ENCODE measurements at regions of chr16 and their contacts with region 1.

Region 1: DNA sequence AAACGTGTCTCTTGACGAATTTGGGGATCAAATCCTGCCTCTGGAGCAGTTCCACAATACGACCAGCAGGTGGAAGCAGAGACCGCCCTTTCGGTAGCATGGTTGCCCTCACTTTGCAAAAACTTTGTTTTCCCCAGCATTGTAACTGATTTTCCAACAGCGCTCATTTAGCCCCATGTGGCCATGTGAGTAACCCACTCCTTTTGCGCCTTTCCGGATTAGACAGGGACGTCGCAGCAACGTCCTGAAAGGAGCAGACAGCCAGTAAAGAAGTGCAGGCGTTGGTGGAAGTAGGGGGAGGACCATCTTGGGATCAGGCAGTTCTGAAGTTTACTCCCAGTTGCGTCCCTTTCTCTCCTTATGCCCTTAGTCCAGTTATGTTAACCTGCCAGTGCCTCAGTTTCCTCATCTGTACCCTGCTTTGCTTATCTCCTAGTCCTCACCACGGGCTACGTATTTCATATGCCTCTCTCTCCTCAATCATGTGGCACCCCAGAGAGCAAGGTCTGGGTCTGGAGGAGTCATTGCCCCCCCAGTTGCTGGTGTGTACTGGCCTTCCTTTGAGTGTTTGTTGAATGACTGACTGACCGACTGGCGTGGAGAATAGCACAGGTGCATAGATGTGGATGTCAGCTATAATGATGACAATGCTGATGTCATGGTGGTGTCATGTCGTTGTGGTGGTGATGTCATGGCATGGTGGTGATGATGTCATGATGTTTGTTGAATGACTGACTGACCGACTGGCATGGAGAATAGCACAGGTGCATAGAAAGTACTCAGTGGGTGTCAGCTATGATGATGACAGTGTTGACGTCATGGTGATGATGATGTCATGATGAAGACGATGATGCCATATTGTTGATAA is 22.3 kb downstream of the TMEM114 start:
- DNase-seq: peak; percentile 61 to 70
- ATAC-seq: peak; percentile 67 to 88 (median 84)
- H3K4me3 ChIP-seq: no peak overlapping the region
- H3K27ac ChIP-seq: no peak overlapping the region
- H3K4me1 ChIP-seq: no peaks in the 10 kb centered on the region
- H3K27me3 ChIP-seq: peaks cover 0 to 29% (median 5%) of the 10 kb centered on the region in 3 donors
- CTCF ChIP-seq: peak; percentile 96

Region 2: DNA sequence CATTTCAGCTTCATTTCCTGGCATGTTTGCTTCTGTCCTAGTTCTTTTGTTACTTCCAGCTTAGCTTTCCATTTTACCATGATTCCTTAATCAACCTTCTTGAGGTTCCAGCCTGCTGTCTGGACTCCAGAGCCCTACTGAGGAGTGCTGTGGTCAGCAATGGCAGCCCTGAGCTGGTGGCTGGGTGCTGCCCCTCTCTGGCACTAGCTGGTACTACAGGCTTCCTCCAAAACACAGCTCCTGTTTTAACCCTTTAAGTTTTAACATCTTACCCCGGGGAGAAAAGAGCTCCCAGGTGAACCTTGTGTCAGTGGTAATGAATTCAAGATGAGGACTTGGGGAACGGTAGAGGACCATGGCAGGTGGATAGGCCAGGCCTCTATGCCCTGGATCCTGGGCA is 373.2 kb before region 1 on chr16:
- intact Hi-C with region 1: no loop called
- DNase-seq: no peak
- ATAC-seq: no peak
- H3K4me3 ChIP-seq: no peak overlapping the region
- H3K27ac ChIP-seq: no peak overlapping the region
- H3K4me1 ChIP-seq: no peaks in the 10 kb centered on the region
- H3K27me3 ChIP-seq: peaks cover 0 to 2% (median 2%) of the 10 kb centered on the region in 3 donors
- CTCF ChIP-seq: no peak

Region 3: GRCh38 chr16:8330761-8331160 is 237.2 kb before region 1 on chr16:
- intact Hi-C with region 1: no loop called
- DNase-seq: no peak
- ATAC-seq: no peak
- H3K4me3 ChIP-seq: no peak overlapping the region
- H3K27ac ChIP-seq: no peak overlapping the region
- H3K4me1 ChIP-seq: no peaks in the 10 kb centered on the region
- H3K27me3 ChIP-seq: no peaks in the 10 kb centered on the region
- CTCF ChIP-seq: no peak

Region 4: GRCh38 chr16:8621572-8622314 is 53.8 kb after region 1 on chr16 and contains the start of gene METTL22:
- intact Hi-C with region 1: loop called in 1 of 2 experiments (anchors 2 kb)
- DNase-seq: peak; percentile 92 to 96
- ATAC-seq: peak; percentile 96 to 98 (median 97)
- H3K4me3 ChIP-seq: peak within 1 kb of the TSS; percentile 85
- H3K27ac ChIP-seq: peak within 1 kb of the TSS; percentile 94
- H3K4me1 ChIP-seq: peaks cover 18% of the 10 kb centered on the region
- H3K27me3 ChIP-seq: no peaks in the 10 kb centered on the region
- CTCF ChIP-seq: no peak
- total RNA-seq, gene METTL22: 66.4 to 85.9 (median 74.8) TPM

Region 5: DNA sequence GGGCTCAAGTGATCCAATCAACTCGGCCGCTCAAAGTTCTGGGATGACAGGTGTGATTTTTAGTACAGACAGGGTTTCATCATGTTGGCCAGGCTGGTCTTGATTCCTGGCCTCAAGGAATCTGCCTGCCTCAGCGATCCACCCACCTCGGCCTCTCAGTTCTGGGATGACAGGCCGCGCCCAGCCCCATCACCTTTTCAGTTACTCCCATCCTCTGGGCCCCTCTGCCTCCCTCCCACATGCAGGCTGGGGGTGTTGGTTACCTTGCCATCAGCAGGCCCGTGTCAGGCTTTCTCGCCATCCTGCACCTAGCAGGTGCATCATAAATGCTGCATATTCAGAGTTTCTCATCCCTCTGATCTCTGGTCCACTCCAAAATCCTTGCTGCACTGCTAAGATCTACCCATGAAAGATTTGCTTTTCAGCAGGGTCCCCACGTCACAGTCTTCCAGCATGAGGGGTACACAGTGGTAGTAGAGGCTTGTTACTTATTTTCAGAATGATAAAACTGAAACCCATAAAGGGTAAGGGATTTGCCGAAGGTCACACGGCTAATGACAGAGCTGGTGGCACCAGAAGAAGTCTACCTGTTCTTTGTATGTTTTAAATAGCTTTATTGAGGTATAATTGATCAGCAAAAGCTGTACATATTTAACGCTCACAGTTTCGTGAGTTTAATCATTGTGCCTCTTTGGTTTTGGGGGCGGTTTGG is 246.3 kb after region 1 on chr16:
- intact Hi-C with region 1: no loop called
- DNase-seq: no peak
- ATAC-seq: no peak
- H3K4me3 ChIP-seq: no peak overlapping the region
- H3K27ac ChIP-seq: no peak overlapping the region
- H3K4me1 ChIP-seq: no peaks in the 10 kb centered on the region
- H3K27me3 ChIP-seq: no peaks in the 10 kb centered on the region
- CTCF ChIP-seq: no peak

Region 6: GRCh38 chr16:8885674-8886592 is 317.9 kb after region 1 on chr16:
- intact Hi-C with region 1: loop called (anchors 5 kb)
- DNase-seq: peak; percentile 51 to 70
- ATAC-seq: peak; percentile 25 to 54 (median 42)
- H3K4me3 ChIP-seq: no peak overlapping the region
- H3K27ac ChIP-seq: peak overlapping the region; percentile 48
- H3K4me1 ChIP-seq: peaks cover 46% of the 10 kb centered on the region
- H3K27me3 ChIP-seq: peaks cover 0 to 16% (median 0%) of the 10 kb centered on the region in 3 donors
- CTCF ChIP-seq: no peak